Dendritic cell treated with granulocyte-macrophage colony-stimulating factor and Interleukin-4, amounts not matched to agents 40 ng/mL and 50 ng/mL, for 4 days (primary cell): ENCODE measurements at regions of chr3 and their contacts with region 1.

Region 1: GRCh38 chr3:57646723-57647122 is 46.2 kb downstream of the DENND6A start:
- H3K4me3 Mint-ChIP-seq: no peak overlapping the region
- H3K27ac Mint-ChIP-seq: peak overlapping the region; percentile 36
- H3K4me1 Mint-ChIP-seq: peaks cover 16% of the 10 kb centered on the region
- H3K27me3 Mint-ChIP-seq: no peaks in the 10 kb centered on the region

Region 2: DNA sequence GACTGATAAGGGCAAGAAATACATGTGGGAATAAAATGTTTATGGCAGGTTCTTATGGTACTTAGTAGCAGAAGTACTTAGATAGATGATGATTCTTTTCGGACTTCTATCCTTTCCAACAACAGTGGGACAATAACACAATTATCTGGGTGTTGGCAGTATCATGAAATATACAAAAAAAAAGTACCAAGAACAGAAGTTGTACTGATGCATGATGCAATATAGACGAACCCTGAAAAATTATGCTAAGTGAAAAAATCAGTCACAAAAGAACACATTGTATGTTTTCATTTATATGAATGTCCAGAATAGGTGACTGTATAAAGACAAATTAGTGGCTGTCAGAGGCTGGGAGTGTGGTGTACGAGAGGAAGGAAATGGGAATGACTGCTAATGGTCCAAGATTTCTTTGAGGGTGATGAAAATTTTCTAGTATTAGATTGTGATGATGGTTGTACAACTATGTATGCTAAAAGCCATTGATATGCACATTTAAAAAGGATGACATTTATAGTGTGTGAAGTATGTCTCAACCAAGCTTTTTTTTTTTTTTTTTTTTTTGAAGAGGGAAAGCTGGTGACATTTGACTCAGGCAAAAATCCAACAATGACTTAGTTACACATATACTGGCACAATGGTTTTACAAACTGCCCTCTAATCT is 70.6 kb before region 1 on chr3:
- intact Hi-C with region 1: loop called (anchors 10 kb)
- H3K4me3 Mint-ChIP-seq: no peak overlapping the region
- H3K27ac Mint-ChIP-seq: peak overlapping the region; percentile 12
- H3K4me1 Mint-ChIP-seq: peaks cover 7% of the 10 kb centered on the region
- H3K27me3 Mint-ChIP-seq: no peaks in the 10 kb centered on the region

Region 3: GRCh38 chr3:57587905-57588304 is 58.8 kb before region 1 on chr3:
- intact Hi-C with region 1: no loop called
- H3K4me3 Mint-ChIP-seq: no peak overlapping the region
- H3K27ac Mint-ChIP-seq: no peak overlapping the region
- H3K4me1 Mint-ChIP-seq: peaks cover 8% of the 10 kb centered on the region
- H3K27me3 Mint-ChIP-seq: no peaks in the 10 kb centered on the region

Region 4: DNA sequence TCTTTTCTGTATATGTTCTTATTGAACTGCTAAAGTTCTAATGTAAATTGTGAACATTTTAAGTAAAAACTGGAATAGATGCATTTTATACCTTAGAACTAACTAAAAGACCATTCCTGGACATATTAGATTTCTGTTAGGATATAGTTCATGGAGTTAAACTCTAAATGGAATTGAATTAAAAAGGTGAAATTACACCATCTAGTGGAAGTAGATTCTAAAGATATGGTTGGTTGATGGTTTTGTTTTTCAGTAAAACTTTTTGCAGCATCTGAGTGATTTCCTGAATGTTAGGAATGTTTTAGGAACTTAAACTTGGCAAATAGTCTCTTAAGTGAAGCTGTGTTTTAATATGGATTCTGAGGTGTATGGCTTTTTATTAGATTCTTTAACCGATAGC is 206.2 kb after region 1 on chr3:
- intact Hi-C with region 1: loop called (anchors 10 kb)
- H3K4me3 Mint-ChIP-seq: no peak overlapping the region
- H3K27ac Mint-ChIP-seq: no peak overlapping the region
- H3K4me1 Mint-ChIP-seq: peaks cover 7% of the 10 kb centered on the region
- H3K27me3 Mint-ChIP-seq: no peaks in the 10 kb centered on the region